PC-3 (cell line): ENCODE measurements at regions of chr4 and their contacts with region 1.

Region 1: DNA sequence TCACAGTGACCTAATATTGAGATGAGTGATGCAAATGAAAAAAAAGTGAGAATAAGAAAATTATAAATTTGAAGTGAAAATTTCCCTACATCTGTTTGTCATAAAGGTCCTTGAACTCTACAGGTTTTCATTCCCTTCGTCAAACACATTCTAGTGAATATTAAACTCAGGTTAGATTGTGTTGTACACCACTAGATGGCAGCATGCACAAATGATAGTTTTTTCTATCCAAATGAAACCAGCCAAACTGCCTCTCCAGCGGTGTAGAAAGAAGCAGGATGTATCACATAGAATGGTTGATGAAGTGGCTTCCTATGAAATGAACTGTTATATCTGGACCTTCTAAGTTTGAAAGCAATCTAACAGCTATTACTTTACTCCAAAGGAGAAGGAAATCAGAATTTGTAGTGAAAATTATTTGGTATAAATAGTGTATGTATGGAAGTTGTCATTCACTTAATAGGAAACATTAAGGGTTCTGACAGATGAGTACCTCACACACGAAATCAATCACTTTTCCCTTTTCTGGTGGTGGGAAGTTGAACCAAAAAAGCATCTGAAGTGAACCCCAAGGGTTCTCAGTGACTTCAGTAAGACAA is 382.7 kb downstream of the UNC5C start:
- DNase-seq: peak; percentile 72
- ATAC-seq: peak; percentile 72
- H3K4me3 ChIP-seq: no peak overlapping the region
- H3K27ac ChIP-seq: no peak overlapping the region
- H3K4me1 ChIP-seq: 0 out of 2 replicates have a peak, but pooled peaks cover 3% of the 10 kb centered on the region
- H3K27me3 ChIP-seq: no peaks in the 10 kb centered on the region
- CTCF ChIP-seq: peak; percentile 69

Region 2: DNA sequence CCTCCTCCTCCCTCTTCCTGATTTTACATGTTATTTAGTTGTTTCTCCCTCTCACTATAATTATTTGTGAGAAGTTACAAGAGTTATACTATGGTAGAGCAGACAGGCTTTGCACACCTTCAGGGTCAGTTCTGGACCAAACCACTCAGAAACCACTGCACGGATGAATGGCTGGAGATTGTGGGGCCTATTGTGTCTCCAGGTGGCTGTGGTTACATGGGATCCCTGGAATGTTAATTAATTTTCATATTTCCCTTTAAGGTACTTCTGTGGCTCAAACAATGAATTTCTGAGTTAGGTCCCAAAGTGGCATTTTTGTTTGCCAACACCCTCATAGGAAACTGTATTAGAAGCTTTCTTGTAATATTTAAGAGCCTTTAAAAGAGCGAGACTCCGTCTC is 256.4 kb before region 1 on chr4:
- CTCF ChIA-PET with region 1: no interaction called
- POLR2A ChIA-PET with region 1: no interaction called
- intact Hi-C with region 1: no loop called
- DNase-seq: no peak
- ATAC-seq: no peak
- H3K4me3 ChIP-seq: no peak overlapping the region
- H3K27ac ChIP-seq: no peak overlapping the region
- H3K4me1 ChIP-seq: no peaks in the 10 kb centered on the region
- H3K27me3 ChIP-seq: no peaks in the 10 kb centered on the region
- CTCF ChIP-seq: no peak

Region 3: GRCh38 chr4:95243892-95244291 is 77.9 kb after region 1 on chr4:
- CTCF ChIA-PET with region 1: no interaction called
- POLR2A ChIA-PET with region 1: no interaction called
- intact Hi-C with region 1: no loop called
- DNase-seq: no peak
- ATAC-seq: no peak
- H3K4me3 ChIP-seq: no peak overlapping the region
- H3K27ac ChIP-seq: no peak overlapping the region
- H3K4me1 ChIP-seq: peaks cover 5% of the 10 kb centered on the region; the same call in 1 of the 2 replicates
- H3K27me3 ChIP-seq: no peaks in the 10 kb centered on the region
- CTCF ChIP-seq: no peak

Region 4: DNA sequence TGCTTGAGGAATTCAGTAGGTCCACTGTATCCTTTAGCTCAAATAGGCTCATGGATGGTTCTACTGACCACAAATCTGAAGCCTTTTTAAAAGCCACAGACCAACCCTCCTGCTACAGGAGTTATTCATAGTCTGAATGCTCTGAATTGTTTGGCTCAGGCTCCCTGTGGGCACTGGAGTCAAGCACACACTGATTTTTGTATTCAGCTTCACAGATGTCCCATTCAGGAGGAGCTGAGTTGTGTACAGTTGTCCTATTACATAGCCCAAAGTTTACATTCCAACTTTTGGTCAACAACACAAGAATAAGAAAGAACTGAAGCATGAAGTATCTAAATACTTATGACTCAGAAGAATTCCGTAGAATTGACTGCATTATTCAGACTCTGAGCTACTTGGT is 138.9 kb after region 1 on chr4:
- CTCF ChIA-PET with region 1: no interaction called
- POLR2A ChIA-PET with region 1: no interaction called
- intact Hi-C with region 1: loop called (anchors 10 kb)
- DNase-seq: peak; percentile 94
- ATAC-seq: peak; percentile 95
- H3K4me3 ChIP-seq: no peak overlapping the region
- H3K27ac ChIP-seq: peak overlapping the region; percentile 87
- H3K4me1 ChIP-seq: peaks cover 26% of the 10 kb centered on the region
- H3K27me3 ChIP-seq: no peaks in the 10 kb centered on the region
- CTCF ChIP-seq: no peak

Region 5: DNA sequence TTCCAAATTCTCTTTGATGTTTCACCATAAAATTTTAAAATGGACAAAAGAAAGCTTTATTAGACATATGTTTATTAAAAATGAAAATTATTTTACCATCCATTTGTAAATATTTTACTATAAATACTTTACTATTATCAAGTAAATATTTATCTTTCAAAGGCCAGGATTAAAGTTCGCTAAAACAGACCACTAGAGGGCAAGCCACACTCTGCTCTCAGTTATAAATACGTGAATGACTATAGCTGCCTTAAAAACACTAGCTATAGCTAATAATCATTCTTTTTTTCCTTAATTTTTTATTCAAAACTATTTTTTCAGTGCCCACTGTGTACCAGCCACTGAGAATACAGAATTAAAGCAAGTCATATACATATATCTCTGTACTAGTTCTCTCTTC is 344.1 kb after region 1 on chr4:
- CTCF ChIA-PET with region 1: no interaction called
- POLR2A ChIA-PET with region 1: no interaction called
- intact Hi-C with region 1: loop called (anchors 2 kb)
- DNase-seq: peak; percentile 36
- ATAC-seq: peak; percentile 57; the same call in 1 of the 2 replicates
- H3K4me3 ChIP-seq: no peak overlapping the region
- H3K27ac ChIP-seq: no peak overlapping the region
- H3K4me1 ChIP-seq: peaks cover 10% of the 10 kb centered on the region
- H3K27me3 ChIP-seq: no peaks in the 10 kb centered on the region
- CTCF ChIP-seq: peak; percentile 54

Region 6: DNA sequence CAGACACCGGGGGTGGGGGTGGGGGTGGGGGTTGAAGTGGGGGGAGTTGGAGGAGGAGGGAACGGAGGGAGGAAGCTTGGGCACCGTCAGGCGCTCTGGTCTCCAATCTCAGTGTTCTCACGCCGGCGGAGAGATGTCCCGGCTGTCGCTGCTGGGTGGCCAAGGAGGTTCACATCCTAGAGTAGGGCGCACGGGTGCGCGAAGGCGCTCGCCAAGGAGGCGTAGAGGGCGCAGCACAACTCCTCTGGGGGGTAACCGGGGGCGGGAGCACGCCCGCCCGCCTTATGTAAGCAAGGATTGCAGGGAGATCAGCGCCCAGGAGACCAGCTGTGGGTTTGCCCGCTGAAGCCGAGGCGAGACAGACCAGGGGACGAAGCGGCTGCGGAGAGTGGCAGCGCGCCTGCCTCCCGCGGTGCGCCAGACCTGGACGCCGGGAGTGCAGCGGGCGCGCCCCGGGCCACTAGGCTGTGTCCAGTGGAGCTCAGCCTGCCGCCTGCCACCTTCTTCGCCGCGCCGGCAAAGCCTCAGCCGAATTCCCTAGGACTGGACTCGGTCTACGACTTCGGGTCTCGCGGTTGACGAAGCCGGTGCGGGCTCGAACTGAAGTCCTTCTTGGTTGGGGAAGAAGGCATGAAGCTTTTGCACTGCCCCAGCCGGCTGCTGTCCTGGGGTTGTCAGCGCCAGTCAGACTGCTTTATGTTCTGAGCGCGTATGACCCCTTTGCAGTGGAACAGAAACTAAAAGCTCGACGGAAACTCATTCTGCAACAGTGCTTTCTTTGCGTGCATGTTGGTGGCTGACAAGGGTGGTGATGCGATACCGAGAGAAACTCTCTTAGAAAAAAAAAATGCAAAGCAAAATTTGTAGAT is 383.5 kb after region 1 on chr4:
- CTCF ChIA-PET with region 1: interaction called, 5 read pairs
- POLR2A ChIA-PET with region 1: no interaction called
- intact Hi-C with region 1: loop called (anchors 10 kb)
- DNase-seq: no peak
- ATAC-seq: peak; percentile 52
- H3K4me3 ChIP-seq: peak overlapping the region; percentile 73
- H3K27ac ChIP-seq: no peak overlapping the region
- H3K4me1 ChIP-seq: peaks cover 4% of the 10 kb centered on the region
- H3K27me3 ChIP-seq: peaks cover 47% of the 10 kb centered on the region
- CTCF ChIP-seq: no peak

Region 7: GRCh38 chr4:96352051-96352517 is 1186.1 kb after region 1 on chr4:
- CTCF ChIA-PET with region 1: no interaction called
- POLR2A ChIA-PET with region 1: no interaction called
- intact Hi-C with region 1: loop called (anchors 10 kb)
- DNase-seq: peak; percentile 33
- ATAC-seq: peak; percentile 29; the same call in 1 of the 2 replicates
- H3K4me3 ChIP-seq: no peak overlapping the region
- H3K27ac ChIP-seq: no peak overlapping the region
- H3K4me1 ChIP-seq: no peaks in the 10 kb centered on the region
- H3K27me3 ChIP-seq: no peaks in the 10 kb centered on the region
- CTCF ChIP-seq: peak; percentile 59; the same call in 1 of the 2 replicates

Region 8: DNA sequence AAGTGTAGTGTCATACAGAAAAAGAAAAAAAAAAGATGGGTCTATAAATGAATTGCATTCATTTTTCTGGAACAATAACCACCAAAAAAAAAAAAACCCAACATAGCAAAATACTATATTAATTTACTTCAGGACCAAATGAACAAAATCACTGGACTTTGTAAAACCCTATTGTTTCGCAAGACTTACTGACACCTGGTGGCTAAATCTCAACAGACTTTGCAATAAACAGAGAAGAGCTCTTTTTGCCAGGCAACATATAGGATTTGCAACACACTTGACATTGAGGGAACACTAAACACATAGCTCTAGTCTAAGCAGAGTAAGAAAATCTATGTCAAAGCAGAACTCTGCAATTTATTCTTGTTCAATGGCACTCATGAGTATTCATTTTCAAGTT is 1987.0 kb after region 1 on chr4:
- CTCF ChIA-PET with region 1: no interaction called
- POLR2A ChIA-PET with region 1: no interaction called
- intact Hi-C with region 1: loop called (anchors 10 kb)
- DNase-seq: peak; percentile 35
- ATAC-seq: no peak; the same call in 1 of the 2 replicates
- H3K4me3 ChIP-seq: no peak overlapping the region
- H3K27ac ChIP-seq: no peak overlapping the region
- H3K4me1 ChIP-seq: no peaks in the 10 kb centered on the region
- H3K27me3 ChIP-seq: no peaks in the 10 kb centered on the region
- CTCF ChIP-seq: peak; percentile 54